IMR-90 (cell line): ENCODE measurements at regions of chr6 and their contacts with region 1.

Region 1: DNA sequence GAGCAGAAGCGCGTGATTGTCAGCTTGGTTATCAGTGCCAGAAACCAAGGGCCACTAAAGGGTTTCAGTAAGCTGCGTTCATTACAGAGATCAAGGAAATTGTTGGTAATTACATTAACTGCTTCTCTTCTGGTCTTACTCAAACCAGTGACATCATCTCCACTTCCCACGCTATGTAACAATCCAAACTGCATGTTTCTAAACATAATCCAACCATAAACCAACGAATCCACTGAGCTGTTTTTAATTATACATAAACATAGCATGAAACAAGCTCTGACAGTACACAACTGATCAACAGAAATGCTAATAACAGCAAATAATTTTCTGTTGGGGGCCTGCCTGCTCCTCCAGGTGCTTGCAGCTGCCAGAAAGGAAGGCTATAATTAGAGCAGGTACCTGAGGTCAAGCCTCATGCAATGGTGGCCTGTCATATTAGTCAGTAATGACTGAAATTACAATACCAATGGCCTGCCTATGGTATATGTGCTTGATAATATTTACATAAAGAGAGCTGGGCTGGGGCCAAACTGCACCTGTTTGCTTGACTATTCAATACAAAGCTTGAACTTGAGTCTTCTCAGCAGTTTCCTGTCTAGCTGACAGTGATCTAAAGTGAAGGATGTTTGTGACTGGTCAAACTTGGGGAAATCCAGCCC is 40.1 kb downstream of the ILRUN start:
- DNase-seq: peak; percentile 90
- ATAC-seq: peak; percentile 73
- H3K4me3 ChIP-seq: peak overlapping the region; percentile 58; the same call in 1 of the 2 replicates
- H3K27ac ChIP-seq: peak overlapping the region; percentile 89
- H3K4me1 ChIP-seq: peaks cover 12% of the 10 kb centered on the region
- H3K27me3 ChIP-seq: no peaks in the 10 kb centered on the region
- CTCF ChIP-seq: no peak
- POLR2A ChIP-seq: no peak
- RAD21 ChIP-seq: no peak

Region 2: DNA sequence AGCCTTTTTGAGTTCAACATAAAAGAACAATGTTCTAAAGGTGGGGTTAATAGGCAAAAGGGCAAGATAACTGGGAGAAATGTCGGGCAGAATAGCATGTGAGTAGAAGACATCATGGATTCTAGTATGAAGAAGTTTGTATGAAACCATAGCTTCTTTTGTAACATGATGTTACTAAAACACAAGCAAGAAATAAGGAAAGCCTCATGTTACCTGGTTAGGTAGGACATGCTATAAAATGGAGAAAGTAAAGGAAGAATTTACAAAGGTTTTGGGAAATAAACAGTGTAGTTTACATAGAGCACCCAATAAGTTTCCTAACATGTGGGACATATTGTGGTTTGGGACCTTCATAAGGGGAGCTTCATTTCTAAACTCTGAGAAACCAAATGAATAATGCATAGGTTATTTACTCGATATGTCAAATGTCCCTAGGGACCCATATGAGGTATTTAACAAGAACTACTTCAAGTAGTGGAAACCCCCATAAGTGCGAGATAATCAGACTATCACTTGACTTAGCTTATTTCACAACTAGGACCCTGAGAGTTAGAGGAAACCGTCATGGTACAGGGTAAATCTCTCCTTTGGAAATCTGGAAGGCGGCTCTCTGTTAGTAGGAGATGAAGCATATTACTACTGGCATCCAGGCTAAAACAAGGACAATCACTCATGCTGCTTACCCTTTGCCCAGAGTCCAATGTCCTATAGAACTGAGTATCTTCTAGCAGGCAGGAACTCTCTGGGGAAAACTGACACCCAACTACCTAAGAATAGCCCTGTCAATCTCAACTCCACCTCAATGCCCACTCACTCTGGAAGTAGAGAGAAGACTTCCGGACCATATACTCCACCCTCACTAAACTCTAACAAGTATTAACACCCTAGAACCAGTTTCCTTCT is 17.4 kb before region 1 on chr6:
- CTCF ChIA-PET with region 1: no interaction called
- POLR2A ChIA-PET with region 1: interaction called, 11 read pairs
- dilution Hi-C with region 1: no loop called
- in situ Hi-C with region 1: no loop called
- intact Hi-C with region 1: no loop called
- DNase-seq: no peak
- ATAC-seq: no peak
- H3K4me3 ChIP-seq: no peak overlapping the region
- H3K27ac ChIP-seq: no peak overlapping the region
- H3K4me1 ChIP-seq: no peaks in the 10 kb centered on the region
- H3K27me3 ChIP-seq: no peaks in the 10 kb centered on the region
- CTCF ChIP-seq: no peak
- POLR2A ChIP-seq: no peak
- RAD21 ChIP-seq: no peak

Region 3: GRCh38 chr6:34696739-34697543 is 40.4 kb after region 1 on chr6 and contains the start of gene ILRUN:
- CTCF ChIA-PET with region 1: no interaction called
- POLR2A ChIA-PET with region 1: interaction called, 3 read pairs
- dilution Hi-C with region 1: no loop called
- in situ Hi-C with region 1: no loop called
- intact Hi-C with region 1: loop called (anchors 1 kb)
- DNase-seq: peak; percentile 92
- ATAC-seq: peak; percentile 97
- H3K4me3 ChIP-seq: peak within 1 kb of the TSS; percentile 89
- H3K27ac ChIP-seq: peak within 1 kb of the TSS; percentile 95
- H3K4me1 ChIP-seq: peaks cover 4% of the 10 kb centered on the region; the same call in 1 of the 2 replicates
- H3K27me3 ChIP-seq: no peaks in the 10 kb centered on the region
- CTCF ChIP-seq: no peak
- POLR2A ChIP-seq: no peak
- RAD21 ChIP-seq: no peak
- total RNA-seq, gene ILRUN: 29.9 and 32.2 TPM in 2 replicates

Region 4: DNA sequence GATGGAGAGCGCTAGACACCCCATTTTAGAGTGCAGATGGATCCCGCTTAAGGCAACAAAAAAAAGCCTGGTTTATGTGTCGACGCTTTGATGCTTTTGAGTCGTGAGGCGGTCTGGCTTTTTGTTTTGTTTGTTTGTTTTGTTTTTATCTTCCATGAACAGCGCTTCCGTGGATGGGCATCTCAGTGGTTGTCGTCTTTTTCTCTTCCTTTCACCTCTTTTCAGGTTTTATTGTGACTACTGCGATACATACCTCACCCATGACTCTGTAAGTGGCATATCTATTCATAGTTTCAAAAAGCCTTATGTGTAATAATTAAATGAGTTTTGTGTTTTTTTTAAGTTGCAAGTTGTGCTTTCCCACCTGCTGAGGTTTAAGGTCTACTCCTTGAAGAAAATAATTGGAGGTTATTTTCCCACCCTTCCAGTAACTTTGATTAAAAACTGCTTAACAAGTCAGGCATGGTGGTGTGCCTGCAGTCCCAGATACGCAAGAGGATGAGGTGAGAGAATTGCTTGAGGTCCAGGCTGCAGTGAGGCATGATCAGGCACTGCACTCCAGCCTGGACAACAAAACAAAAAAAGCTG is 101.3 kb after region 1 on chr6:
- CTCF ChIA-PET with region 1: no interaction called
- POLR2A ChIA-PET with region 1: interaction called, 3 read pairs
- dilution Hi-C with region 1: no loop called
- in situ Hi-C with region 1: no loop called
- intact Hi-C with region 1: loop called (anchors 2 kb)
- DNase-seq: no peak
- ATAC-seq: no peak
- H3K4me3 ChIP-seq: peak overlapping the region; percentile 71
- H3K27ac ChIP-seq: peak overlapping the region; percentile 84
- H3K4me1 ChIP-seq: no peaks in the 10 kb centered on the region
- H3K27me3 ChIP-seq: no peaks in the 10 kb centered on the region
- CTCF ChIP-seq: no peak
- POLR2A ChIP-seq: no peak; the same call in 1 of the 2 replicates
- RAD21 ChIP-seq: no peak